ENCODE measurements at regions of chr2 and their contacts with region 1.

Region 1: DNA sequence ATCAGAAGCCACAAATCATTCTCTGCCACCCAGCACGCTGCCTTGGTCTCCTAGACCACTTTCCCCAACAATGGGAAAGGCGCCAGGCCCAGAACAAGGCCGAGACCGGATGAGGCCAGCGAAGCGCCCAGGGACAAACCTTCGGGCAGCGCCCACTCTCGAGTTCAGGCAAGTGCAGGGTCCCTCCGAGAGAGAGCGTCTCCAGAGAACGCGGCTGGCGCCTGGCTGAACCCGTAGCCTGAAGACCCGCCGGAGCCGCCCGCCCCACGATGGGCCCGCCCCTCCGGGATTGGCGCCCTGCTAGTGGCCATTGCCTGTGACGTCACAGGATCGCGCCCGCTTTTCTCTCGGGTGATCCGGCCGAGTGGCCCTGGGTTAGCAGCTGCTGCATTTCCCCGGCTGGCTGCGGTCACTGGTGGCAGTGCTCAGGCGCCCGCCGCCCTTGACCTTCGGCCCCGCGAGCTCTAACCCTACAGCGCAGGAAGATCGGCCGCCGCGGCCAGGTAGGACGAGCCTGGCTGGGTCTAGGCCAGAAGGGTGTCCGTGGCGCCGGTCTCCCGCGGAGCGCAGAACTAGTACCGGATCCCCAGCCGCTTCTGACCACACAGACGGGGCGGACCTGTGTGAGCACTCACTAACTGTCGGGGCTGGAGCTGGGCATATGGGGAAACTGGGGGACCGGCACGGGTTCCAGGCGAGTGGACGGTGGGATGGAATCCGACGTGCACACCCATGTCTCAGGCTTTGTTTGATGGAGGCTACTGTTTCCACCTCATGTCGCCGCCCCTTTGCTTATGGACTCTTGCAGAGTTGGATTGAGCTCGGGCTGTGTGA is at the start of gene FAHD2A:
- DNase-seq: peak; percentile 93
- ATAC-seq: peak; percentile 86
- H3K4me3 ChIP-seq: peak within 1 kb of the TSS; percentile 100
- H3K27ac ChIP-seq: peak within 1 kb of the TSS; percentile 34; the same call in 1 of the 2 replicates
- H3K4me1 ChIP-seq: peaks cover 6% of the 10 kb centered on the region; the same call in 1 of the 2 replicates
- H3K27me3 ChIP-seq: no peaks in the 10 kb centered on the region
- CTCF ChIP-seq: no peak
- total RNA-seq, gene FAHD2A: 10.8 and 20.5 TPM in 2 replicates

Region 2: DNA sequence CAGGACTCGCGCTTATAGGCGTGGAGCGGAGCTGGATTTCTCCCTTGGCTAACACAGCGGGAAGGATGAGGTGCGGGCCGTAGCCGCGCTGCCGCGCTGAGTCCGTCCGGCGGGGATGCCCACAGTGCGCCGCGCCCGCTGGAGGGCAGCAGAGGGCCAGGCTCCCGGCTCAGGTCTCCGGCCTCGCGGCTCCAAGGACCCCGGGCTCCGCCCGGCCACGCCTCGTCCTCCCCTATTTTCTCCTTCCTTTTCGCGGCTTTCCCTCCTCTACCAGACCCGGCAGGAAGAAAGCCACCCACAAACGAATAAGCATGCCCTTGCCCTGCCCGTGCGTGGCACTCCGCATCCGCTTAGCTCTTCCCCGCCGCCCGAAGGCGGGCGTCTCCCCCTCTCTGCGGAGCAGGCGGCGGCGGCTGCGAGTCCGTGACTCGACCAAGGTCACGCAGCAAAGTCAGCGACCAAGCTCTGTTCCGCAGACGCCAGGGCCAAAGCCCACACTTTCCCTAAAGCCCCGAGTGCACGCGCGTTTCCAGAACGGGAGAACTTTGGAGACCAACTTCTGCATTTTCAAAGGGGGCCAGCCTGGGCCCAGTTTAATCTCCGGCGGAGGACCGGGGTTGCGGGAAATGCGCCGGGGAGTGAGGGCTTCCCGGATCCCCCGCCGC is 56.9 kb before region 1 on chr2:
- CTCF ChIA-PET with region 1: no interaction called
- POLR2A ChIA-PET with region 1: interaction called, 3 read pairs
- intact Hi-C with region 1: loop called (anchors 5 kb)
- DNase-seq: peak; percentile 87
- ATAC-seq: peak; percentile 87
- H3K4me3 ChIP-seq: peak overlapping the region; percentile 84
- H3K27ac ChIP-seq: peak overlapping the region; percentile 83
- H3K4me1 ChIP-seq: peaks cover 25% of the 10 kb centered on the region
- H3K27me3 ChIP-seq: no peaks in the 10 kb centered on the region
- CTCF ChIP-seq: peak; percentile 82

Region 3: GRCh38 chr2:95389245-95390119 is 13.1 kb before region 1 on chr2:
- CTCF ChIA-PET with region 1: no interaction called
- POLR2A ChIA-PET with region 1: no interaction called
- intact Hi-C with region 1: no loop called
- DNase-seq: peak; percentile 66
- ATAC-seq: peak; percentile 92
- H3K4me3 ChIP-seq: no peak overlapping the region
- H3K27ac ChIP-seq: no peak overlapping the region
- H3K4me1 ChIP-seq: no peaks in the 10 kb centered on the region
- H3K27me3 ChIP-seq: no peaks in the 10 kb centered on the region
- CTCF ChIP-seq: peak; percentile 90